CD8-positive, alpha-beta T cell (primary cell): ENCODE measurements at regions of chr12 and their contacts with region 1.

Region 1: DNA sequence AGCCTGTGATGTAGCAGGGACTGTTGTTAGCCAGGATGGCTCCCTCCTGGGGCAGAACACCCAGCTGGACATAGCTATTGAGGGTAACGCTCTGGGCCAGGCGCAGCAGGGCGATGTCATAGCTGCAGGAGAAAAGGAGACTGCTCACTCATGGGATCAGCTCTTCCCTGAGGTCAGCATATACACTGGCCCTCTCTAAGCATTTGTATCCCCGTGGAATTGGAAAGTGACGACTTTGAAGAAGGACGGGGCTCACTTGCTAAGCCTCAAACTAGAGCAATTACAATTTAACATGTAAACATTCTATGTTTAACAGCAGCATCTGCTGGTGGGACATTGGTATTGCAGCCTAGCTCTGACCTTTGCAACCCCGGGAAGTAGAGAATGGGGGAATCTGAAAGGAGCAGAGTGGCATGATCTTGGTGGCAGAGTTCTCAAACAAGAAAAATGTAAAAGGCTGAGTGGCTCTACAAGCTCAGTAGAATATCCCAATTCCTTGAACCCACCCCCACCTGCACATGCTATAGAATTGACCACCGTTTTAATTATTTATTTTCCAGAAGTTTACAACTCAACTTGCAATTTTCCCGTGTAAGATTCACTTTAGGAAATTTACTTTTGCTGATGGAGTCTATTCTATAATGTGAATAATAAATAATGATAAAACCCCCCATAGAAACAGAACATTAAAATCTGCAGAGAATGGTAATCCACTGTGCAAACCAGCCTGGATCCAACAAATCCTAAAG is 5.0 kb downstream of the CELA1 start:
- DNase-seq: peak; percentile 54 to 85 (median 74)
- ATAC-seq: peak; percentile 99
- H3K4me3 ChIP-seq: no peak overlapping the region
- H3K4me3 Mint-ChIP-seq: peak overlapping the region; percentile 40
- H3K27ac ChIP-seq: peak overlapping the region; percentile 6 to 47
- H3K27ac Mint-ChIP-seq: peak overlapping the region; percentile 81
- H3K4me1 ChIP-seq: peaks cover 5% of the 10 kb centered on the region
- H3K4me1 Mint-ChIP-seq: peaks cover 11% of the 10 kb centered on the region
- H3K27me3 ChIP-seq: no peaks in the 10 kb centered on the region
- H3K27me3 Mint-ChIP-seq: no peaks in the 10 kb centered on the region
- CTCF ChIP-seq: peak; percentile 99

Region 2: GRCh38 chr12:49428793-49429192 is 1912.6 kb before region 1 on chr12:
- CTCF ChIA-PET with region 1: no interaction called
- POLR2A ChIA-PET with region 1: no interaction called
- intact Hi-C with region 1: no loop called
- DNase-seq: no peak
- ATAC-seq: no peak
- H3K4me3 ChIP-seq: no peak overlapping the region
- H3K4me3 Mint-ChIP-seq: no peak overlapping the region
- H3K27ac ChIP-seq: no peak overlapping the region
- H3K27ac Mint-ChIP-seq: no peak overlapping the region
- H3K4me1 ChIP-seq: no peaks in the 10 kb centered on the region
- H3K4me1 Mint-ChIP-seq: no peaks in the 10 kb centered on the region
- H3K27me3 ChIP-seq: no peaks in the 10 kb centered on the region
- H3K27me3 Mint-ChIP-seq: no peaks in the 10 kb centered on the region
- CTCF ChIP-seq: no peak

Region 3: GRCh38 chr12:51262758-51263177 is 78.7 kb before region 1 on chr12:
- CTCF ChIA-PET with region 1: interaction called, 89 read pairs
- POLR2A ChIA-PET with region 1: no interaction called
- intact Hi-C with region 1: no loop called
- DNase-seq: peak in 5 of 9 experiments; percentile 17 to 60 (median 36)
- ATAC-seq: no peak
- H3K4me3 ChIP-seq: no peak overlapping the region
- H3K4me3 Mint-ChIP-seq: no peak overlapping the region
- H3K27ac ChIP-seq: no peak overlapping the region
- H3K27ac Mint-ChIP-seq: no peak overlapping the region
- H3K4me1 ChIP-seq: no peaks in the 10 kb centered on the region
- H3K4me1 Mint-ChIP-seq: peaks cover 13% of the 10 kb centered on the region
- H3K27me3 ChIP-seq: no peaks in the 10 kb centered on the region
- H3K27me3 Mint-ChIP-seq: no peaks in the 10 kb centered on the region
- CTCF ChIP-seq: no peak

Region 4: DNA sequence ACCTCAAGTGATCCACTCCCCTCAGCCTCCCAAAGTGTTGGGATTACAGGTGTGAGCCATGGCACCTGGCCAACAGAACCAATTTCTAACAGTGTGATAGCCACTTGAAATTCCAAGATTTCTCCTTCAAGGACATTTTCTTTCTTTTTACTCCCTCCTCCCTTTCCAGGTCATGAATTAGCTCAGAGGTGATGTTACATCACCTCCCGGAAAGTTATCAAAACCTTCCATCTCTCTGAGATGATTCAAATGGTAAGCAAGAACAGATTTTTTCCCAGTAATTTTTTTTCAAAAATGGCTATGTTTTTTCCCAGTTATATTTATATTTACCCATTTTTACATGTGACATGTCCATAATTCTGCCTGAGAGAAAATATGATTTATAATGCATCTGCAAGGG is 55.6 kb before region 1 on chr12:
- CTCF ChIA-PET with region 1: interaction called, 18 read pairs
- POLR2A ChIA-PET with region 1: interaction called, 4 read pairs
- intact Hi-C with region 1: no loop called
- DNase-seq: no peak
- ATAC-seq: no peak
- H3K4me3 ChIP-seq: no peak overlapping the region
- H3K4me3 Mint-ChIP-seq: no peak overlapping the region
- H3K27ac ChIP-seq: no peak overlapping the region
- H3K27ac Mint-ChIP-seq: peak overlapping the region; percentile 81
- H3K4me1 ChIP-seq: no peaks in the 10 kb centered on the region
- H3K4me1 Mint-ChIP-seq: peaks cover 8% of the 10 kb centered on the region
- H3K27me3 ChIP-seq: no peaks in the 10 kb centered on the region
- H3K27me3 Mint-ChIP-seq: no peaks in the 10 kb centered on the region
- CTCF ChIP-seq: no peak

Region 5: GRCh38 chr12:51307655-51308593 is 33.5 kb before region 1 on chr12:
- CTCF ChIA-PET with region 1: interaction called, 73 read pairs
- POLR2A ChIA-PET with region 1: interaction called, 5 read pairs
- intact Hi-C with region 1: loop called (anchors 1 kb)
- DNase-seq: peak in 2 of 9 experiments; percentile 21 to 49
- ATAC-seq: peak; percentile 73
- H3K4me3 ChIP-seq: no peak overlapping the region
- H3K4me3 Mint-ChIP-seq: no peak overlapping the region
- H3K27ac ChIP-seq: peak overlapping the region; percentile 34 to 56
- H3K27ac Mint-ChIP-seq: peak overlapping the region; percentile 80
- H3K4me1 ChIP-seq: peaks cover 54% of the 10 kb centered on the region
- H3K4me1 Mint-ChIP-seq: peaks cover 74% of the 10 kb centered on the region
- H3K27me3 ChIP-seq: no peaks in the 10 kb centered on the region
- H3K27me3 Mint-ChIP-seq: no peaks in the 10 kb centered on the region
- CTCF ChIP-seq: no peak

Region 6: DNA sequence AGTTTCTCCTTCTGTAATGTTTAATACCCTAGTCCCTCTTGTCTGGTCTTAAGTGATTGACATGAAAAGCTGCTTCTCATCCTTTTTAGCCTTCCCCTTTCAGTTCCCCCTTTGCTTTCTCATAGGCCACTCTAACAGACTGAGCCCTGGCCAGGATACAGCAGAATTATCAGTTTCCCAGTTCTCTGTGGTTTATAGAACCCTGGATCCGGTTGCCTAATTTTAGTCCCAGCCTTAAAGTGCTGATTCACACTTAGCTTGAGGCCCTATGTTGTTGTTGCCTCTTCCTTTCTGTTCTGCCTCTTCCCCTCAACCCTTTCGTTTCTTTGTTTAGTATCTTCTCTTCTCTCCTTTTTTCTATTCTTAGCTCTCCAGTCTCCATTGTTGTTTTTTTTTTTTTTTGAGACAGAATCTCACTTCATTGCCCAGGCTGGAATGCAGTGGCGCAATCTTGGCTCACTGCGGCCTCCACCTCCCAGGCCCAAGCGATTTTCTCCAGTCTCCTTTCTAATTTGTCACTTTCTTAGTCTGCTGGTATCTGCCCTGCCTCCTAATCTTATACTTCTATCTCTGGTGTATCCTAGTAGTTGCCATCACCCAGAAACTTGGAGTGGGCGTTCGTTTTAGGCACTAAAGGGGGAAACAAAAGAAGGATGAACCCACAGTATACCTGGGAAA is 14.5 kb before region 1 on chr12:
- CTCF ChIA-PET with region 1: interaction called, 61 read pairs
- POLR2A ChIA-PET with region 1: interaction called, 38 read pairs
- intact Hi-C with region 1: no loop called
- DNase-seq: peak in 2 of 9 experiments; percentile 17 to 49
- ATAC-seq: no peak
- H3K4me3 ChIP-seq: no peak overlapping the region
- H3K4me3 Mint-ChIP-seq: peak overlapping the region; percentile 35
- H3K27ac ChIP-seq: peak overlapping the region in 1 of 2 experiments; percentile 56
- H3K27ac Mint-ChIP-seq: peak overlapping the region; percentile 91
- H3K4me1 ChIP-seq: peaks cover 63% of the 10 kb centered on the region
- H3K4me1 Mint-ChIP-seq: peaks cover 77% of the 10 kb centered on the region
- H3K27me3 ChIP-seq: no peaks in the 10 kb centered on the region
- H3K27me3 Mint-ChIP-seq: no peaks in the 10 kb centered on the region
- CTCF ChIP-seq: no peak

Region 7: DNA sequence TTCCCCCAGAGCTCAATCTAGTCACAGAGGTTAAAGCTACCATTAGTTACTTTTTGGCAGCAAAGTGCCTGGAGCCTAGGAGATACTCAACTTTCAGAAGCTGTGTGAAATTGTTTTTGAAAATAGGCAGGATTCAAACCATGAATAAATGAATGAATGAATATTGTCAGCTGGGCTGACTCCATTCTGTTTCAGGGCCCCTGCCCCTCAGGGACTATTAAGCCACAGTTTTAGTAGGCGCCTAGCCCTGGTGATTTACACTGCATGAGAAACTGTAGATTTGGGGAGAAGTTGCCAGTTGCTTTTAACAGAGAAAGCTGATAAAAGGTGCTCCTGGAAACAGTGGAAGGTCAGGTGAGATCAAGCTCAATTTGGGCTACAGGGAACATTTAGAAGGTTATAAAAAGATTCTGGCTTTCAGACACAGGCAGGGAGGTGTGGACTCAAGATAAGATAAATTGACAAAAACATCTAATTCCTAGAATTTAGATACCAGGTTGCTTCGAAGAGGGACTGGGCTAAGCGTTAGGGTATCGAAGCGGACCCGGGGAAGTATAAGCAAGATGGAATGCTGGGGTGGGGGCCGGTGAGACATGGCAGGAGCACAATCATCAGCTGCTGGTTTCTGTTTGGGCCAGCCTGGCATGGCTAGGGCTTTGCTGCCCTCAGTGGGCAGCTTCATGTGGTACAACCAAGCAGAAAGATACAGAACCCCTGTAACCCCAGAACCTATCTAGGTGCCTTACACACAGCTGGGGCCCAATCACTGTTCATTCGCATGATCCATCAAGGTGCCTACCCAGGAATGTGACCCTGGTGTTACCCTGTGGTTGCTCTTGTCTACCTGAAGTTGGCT is 20.0 kb after region 1 on chr12:
- CTCF ChIA-PET with region 1: interaction called, 16 read pairs
- POLR2A ChIA-PET with region 1: no interaction called
- intact Hi-C with region 1: no loop called
- DNase-seq: no peak
- ATAC-seq: no peak
- H3K4me3 ChIP-seq: no peak overlapping the region
- H3K4me3 Mint-ChIP-seq: no peak overlapping the region
- H3K27ac ChIP-seq: no peak overlapping the region
- H3K27ac Mint-ChIP-seq: no peak overlapping the region
- H3K4me1 ChIP-seq: no peaks in the 10 kb centered on the region
- H3K4me1 Mint-ChIP-seq: peaks cover 5% of the 10 kb centered on the region
- H3K27me3 ChIP-seq: no peaks in the 10 kb centered on the region
- H3K27me3 Mint-ChIP-seq: no peaks in the 10 kb centered on the region
- CTCF ChIP-seq: no peak